Posterior vena cava (tissue), 2 donors: ENCODE measurements at regions of chr21 and their contacts with region 1.

Region 1: GRCh38 chr21:38505654-38506515 is 7.6 kb upstream of the ERG start:
- DNase-seq: no peak

Region 2: DNA sequence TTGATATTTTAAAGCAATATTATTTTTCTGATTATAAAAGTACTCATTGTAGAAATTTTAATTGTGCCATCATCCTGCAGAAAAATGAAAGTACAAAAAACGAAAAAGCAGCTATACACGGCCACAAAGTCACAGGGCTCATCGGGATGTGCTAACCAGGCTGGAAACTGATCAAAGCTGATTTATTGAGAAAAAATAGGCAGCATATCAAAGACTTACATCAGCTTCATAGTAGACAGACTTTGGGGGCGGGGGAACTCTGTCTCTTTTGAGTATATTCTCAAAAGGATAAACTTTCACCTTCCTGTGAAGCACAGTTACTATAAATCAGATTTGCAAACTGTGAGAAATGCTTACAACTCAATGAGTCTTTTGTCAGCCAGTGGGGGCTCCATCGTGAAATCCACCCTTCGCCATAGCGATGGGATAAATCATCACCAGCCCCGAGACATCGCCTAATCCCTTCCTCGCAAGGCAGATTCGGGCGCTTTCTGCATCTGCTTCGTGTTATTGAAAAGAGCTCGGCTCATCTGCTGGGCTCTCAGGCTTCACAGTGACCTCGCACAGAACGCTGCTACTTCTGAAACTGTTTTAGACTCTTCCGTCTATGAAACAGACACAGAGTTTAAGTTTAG is 61.6 kb after region 1 on chr21:
- intact Hi-C with region 1: no loop called
- DNase-seq: no peak

Region 3: GRCh38 chr21:38716942-38717341 is 211.1 kb after region 1 on chr21:
- intact Hi-C with region 1: loop called (anchors 5 kb)
- DNase-seq: no peak

Region 4: DNA sequence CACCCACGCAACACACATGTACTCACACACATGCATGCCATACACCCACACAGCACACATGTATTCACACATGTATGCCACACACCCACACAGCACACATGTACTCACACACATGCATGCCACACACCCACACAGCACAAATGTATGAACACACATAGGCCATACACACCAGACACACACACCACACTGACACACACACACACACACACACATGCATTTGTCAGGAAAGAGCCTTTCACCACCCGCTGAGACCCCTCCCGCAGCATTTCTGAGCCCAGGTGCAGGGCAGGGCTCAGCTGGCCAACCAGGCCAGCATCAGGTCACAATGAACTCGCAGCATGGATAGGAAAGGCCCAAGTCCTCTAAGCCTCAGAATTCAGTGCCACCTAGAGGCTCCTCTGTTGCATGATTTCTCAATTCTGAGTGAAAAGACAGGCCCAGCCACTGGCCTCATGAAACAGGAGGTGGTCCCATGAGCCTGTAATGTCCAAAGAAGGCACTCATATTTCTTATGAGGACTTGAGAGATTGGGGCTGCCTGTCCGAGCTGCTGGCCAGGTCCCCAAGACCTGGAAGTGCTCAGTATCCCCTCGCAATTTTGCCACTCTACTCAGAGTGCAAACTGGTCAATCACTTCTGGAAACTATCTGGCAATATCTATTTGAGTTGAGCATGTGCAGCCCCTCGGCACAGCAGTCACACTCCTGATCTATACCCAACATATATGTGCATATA is 620.0 kb after region 1 on chr21:
- intact Hi-C with region 1: loop called (anchors 10 kb)
- DNase-seq: peak; percentile 75

Region 5: DNA sequence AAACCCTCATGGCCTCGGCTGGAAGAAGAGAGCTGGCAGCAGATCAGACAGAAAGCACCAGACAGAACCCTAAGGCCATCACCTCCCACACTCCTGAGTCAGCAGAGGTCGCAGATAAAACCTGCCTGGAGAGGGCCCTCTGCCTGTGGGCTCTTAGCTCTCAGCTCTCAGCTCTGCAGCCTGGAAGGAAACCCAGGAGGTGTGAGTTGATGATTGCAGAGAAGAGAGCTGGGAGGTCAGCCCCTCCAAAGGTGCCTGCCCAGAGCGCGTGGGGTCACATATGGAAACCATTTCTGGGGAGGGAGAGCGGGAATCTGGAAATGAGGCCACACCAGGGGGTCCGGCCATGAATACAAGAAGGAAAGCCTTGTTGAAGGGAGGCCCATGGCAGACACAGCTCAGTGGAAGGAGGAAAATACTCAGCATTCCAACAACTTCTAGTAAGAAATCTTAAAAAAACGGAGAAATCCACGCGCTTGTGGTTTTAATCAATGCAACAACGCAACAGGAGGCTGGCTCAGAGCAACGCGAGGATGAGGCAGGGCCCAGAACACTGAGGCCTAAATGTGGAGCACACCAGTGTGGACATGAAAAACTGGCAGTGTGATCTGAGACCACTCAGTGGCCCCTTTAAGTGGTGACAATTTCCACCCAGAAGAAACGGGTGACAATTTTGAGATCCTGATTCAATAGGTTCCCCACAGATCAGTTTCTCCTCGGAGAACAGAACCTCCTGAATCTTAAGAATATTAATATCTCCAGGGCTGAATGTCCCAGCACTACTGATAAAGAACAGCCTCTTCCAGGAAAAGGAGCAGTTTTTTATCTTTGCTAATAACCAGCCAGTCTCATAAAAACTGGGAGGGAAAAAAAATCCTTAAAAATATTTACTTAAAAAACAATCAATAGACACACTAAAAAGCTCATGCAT is 631.6 kb after region 1 on chr21:
- intact Hi-C with region 1: loop called in 1 of 2 experiments (anchors 10 kb)
- DNase-seq: no peak